ENCODE measurements at regions of chr1 and their contacts with region 1.

Region 1: GRCh38 chr1:199173356-199173755 is 534.5 kb downstream of the PTPRC start:
- DNase-seq: peak; percentile 92
- ATAC-seq: peak; percentile 89
- H3K4me3 ChIP-seq: no peak overlapping the region
- H3K27ac ChIP-seq: peak overlapping the region; percentile 85
- H3K4me1 ChIP-seq: peaks cover 27% of the 10 kb centered on the region
- H3K27me3 ChIP-seq: no peaks in the 10 kb centered on the region
- CTCF ChIP-seq: no peak
- EP300 ChIP-seq: peak; percentile 94 to 95
- POLR2A ChIP-seq: no peak
- RAD21 ChIP-seq: peak; percentile 20; the same call in 1 of the 2 replicates

Region 2: DNA sequence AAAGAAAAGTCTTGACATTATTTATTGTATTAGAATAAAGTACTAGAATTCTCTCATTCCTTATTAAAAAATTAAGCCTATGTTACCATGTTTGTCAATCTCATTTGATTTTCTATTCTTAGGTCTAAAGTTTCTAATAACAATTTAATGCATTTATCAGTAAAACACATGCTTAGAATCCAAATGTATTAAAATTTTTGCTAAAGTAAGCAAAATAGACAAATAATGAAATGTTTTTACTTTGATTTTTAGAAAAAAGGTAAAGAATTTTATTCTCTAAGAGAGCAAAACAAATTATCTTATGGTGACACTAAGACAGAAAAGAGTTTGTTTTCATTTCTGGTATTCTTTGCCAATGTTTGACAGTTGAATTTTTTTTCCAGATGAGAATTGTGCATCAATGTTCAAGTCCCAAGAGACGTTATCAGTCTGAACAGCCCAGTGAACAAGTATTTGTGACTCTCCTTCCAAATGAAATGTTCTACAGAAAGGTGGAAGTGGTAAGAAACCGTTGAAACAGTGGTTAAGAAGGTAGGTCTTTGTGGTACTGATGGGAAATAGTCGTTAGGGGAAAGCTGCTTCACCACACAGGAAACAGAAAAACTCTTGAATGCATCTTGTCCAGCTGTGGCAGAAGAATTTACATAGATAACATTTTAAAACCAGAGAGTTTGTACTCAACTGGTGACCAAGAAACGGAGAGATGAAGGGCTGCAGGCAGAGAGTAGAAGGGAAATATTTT is 132.0 kb before region 1 on chr1:
- CTCF ChIA-PET with region 1: no interaction called
- POLR2A ChIA-PET with region 1: no interaction called
- RAD21 ChIA-PET with region 1: interaction called, 9 read pairs
- SMC1A ChIA-PET with region 1: interaction called, 10 read pairs
- in situ Hi-C with region 1: no loop called
- intact Hi-C with region 1: loop called (anchors 2 kb)
- DNase-seq: peak; percentile 94
- ATAC-seq: peak; percentile 96
- H3K4me3 ChIP-seq: no peak overlapping the region
- H3K27ac ChIP-seq: no peak overlapping the region
- H3K4me1 ChIP-seq: peaks cover 5% of the 10 kb centered on the region; the same call in 1 of the 2 replicates
- H3K27me3 ChIP-seq: no peaks in the 10 kb centered on the region
- CTCF ChIP-seq: no peak
- EP300 ChIP-seq: peak; percentile 85 to 93
- POLR2A ChIP-seq: no peak
- RAD21 ChIP-seq: no peak

Region 3: DNA sequence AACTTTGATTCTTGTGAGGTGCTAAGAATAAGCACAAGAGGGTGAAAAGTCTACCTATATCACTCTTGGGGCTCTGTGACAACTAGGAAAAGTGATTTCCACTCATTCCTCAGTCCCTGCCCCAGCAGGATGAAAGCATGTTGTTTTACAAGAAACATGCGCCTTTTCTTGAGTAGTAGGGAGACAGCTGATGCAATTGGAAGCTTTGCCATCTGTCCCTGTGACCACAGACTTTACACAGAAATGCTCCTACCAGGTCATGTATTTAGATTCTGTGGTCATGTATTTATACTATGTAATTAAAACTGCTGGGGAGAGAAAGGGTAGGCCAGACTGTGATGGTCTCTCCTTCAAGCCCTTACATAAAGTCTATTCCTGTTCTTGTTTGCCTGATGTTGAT is 89.1 kb before region 1 on chr1:
- CTCF ChIA-PET with region 1: interaction called, 3 read pairs
- POLR2A ChIA-PET with region 1: interaction called, 3 read pairs
- RAD21 ChIA-PET with region 1: interaction called, 22 read pairs
- SMC1A ChIA-PET with region 1: interaction called, 18 read pairs
- in situ Hi-C with region 1: no loop called
- intact Hi-C with region 1: loop called (anchors 5 kb)
- DNase-seq: no peak
- ATAC-seq: no peak
- H3K4me3 ChIP-seq: no peak overlapping the region
- H3K27ac ChIP-seq: no peak overlapping the region
- H3K4me1 ChIP-seq: peaks cover 13% of the 10 kb centered on the region
- H3K27me3 ChIP-seq: no peaks in the 10 kb centered on the region
- CTCF ChIP-seq: no peak
- EP300 ChIP-seq: no peak
- POLR2A ChIP-seq: no peak
- RAD21 ChIP-seq: no peak

Region 4: DNA sequence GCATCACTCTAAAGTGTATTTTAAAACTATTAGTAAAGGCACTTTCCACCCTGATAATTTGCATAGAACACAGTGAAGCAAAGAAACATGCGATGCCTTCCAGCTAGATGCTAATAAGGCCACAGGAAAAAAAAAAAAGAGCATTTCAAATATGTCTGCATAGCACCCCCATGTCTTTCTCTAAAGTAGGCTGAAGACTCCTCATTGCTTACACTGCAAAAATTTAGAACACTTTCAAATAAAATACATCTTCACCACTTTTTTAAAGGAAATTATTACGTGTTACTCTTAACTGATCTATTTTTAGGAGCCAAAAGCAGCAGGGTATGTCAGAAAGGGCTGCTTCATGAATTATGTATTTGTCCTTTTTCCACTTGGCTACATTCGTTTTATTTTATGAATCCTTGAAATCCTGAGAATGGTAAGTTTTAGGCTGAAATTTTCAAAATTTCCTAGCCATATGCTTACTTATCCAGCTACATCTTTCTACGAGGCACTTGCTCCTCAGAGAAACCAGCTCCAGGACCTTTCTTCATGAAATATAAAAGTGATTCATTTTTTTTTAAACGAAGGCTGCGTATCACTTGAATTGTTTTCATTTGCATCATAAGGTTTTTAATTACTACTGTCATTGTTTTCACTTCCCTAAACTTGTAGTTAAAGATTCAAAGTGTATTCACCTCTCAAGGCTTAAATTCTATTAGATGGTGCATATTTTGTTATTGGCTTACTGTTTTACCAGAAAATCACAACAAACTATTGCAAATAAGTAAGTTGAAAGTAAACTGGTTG is 21.5 kb before region 1 on chr1:
- CTCF ChIA-PET with region 1: interaction called, 11 read pairs
- POLR2A ChIA-PET with region 1: interaction called, 3 read pairs
- RAD21 ChIA-PET with region 1: interaction called, 21 read pairs
- SMC1A ChIA-PET with region 1: interaction called, 28 read pairs
- in situ Hi-C with region 1: no loop called
- intact Hi-C with region 1: no loop called
- DNase-seq: no peak
- ATAC-seq: peak; percentile 85
- H3K4me3 ChIP-seq: no peak overlapping the region; the same call in 1 of the 2 replicates
- H3K27ac ChIP-seq: peak overlapping the region; percentile 13; the same call in 1 of the 2 replicates
- H3K4me1 ChIP-seq: peaks cover 12% of the 10 kb centered on the region; the same call in 1 of the 2 replicates
- H3K27me3 ChIP-seq: no peaks in the 10 kb centered on the region
- CTCF ChIP-seq: no peak
- EP300 ChIP-seq: peak; percentile 78 to 82; a peak in 3 of 4 replicates
- POLR2A ChIP-seq: no peak
- RAD21 ChIP-seq: no peak

Region 5: GRCh38 chr1:199272643-199273086 is 99.3 kb after region 1 on chr1:
- CTCF ChIA-PET with region 1: no interaction called
- POLR2A ChIA-PET with region 1: interaction called, 3 read pairs
- RAD21 ChIA-PET with region 1: interaction called, 8 read pairs
- SMC1A ChIA-PET with region 1: interaction called, 8 read pairs
- in situ Hi-C with region 1: no loop called
- intact Hi-C with region 1: loop called (anchors 5 kb)
- DNase-seq: peak; percentile 54
- ATAC-seq: peak; percentile 91
- H3K4me3 ChIP-seq: no peak overlapping the region
- H3K27ac ChIP-seq: no peak overlapping the region
- H3K4me1 ChIP-seq: peaks cover 5% of the 10 kb centered on the region; the same call in 1 of the 2 replicates
- H3K27me3 ChIP-seq: no peaks in the 10 kb centered on the region
- CTCF ChIP-seq: no peak
- EP300 ChIP-seq: peak; percentile 33 to 57; a peak in 2 of 4 replicates
- POLR2A ChIP-seq: no peak
- RAD21 ChIP-seq: no peak

Region 6: GRCh38 chr1:199482426-199482825 is 309.1 kb after region 1 on chr1:
- CTCF ChIA-PET with region 1: no interaction called
- POLR2A ChIA-PET with region 1: no interaction called
- RAD21 ChIA-PET with region 1: no interaction called
- SMC1A ChIA-PET with region 1: no interaction called
- in situ Hi-C with region 1: no loop called
- intact Hi-C with region 1: no loop called
- DNase-seq: no peak
- ATAC-seq: no peak
- H3K4me3 ChIP-seq: no peak overlapping the region
- H3K27ac ChIP-seq: no peak overlapping the region
- H3K4me1 ChIP-seq: no peaks in the 10 kb centered on the region
- H3K27me3 ChIP-seq: no peaks in the 10 kb centered on the region
- CTCF ChIP-seq: no peak
- EP300 ChIP-seq: no peak
- POLR2A ChIP-seq: no peak
- RAD21 ChIP-seq: no peak

Measured in GM12878 (cell line).